Prostate gland (tissue), 2 donors: ENCODE measurements at regions of chr1 and their contacts with region 1.

Region 1: GRCh38 chr1:103106426-103107341 is 1.6 kb downstream of the COL11A1 start:
- DNase-seq: peak; percentile 6
- H3K4me3 ChIP-seq: peak overlapping the region in 1 of 2 donors; percentile 4
- H3K27ac ChIP-seq: no peak overlapping the region
- H3K4me1 ChIP-seq: peaks cover 5% of the 10 kb centered on the region
- H3K27me3 ChIP-seq: no peaks in the 10 kb centered on the region
- CTCF ChIP-seq: peak in 3 of 4 experiments; percentile 29 to 51 (median 29)
- POLR2A ChIP-seq: no peak

Region 2: GRCh38 chr1:102742426-102742825 is 364.3 kb before region 1 on chr1:
- intact Hi-C with region 1: no loop called
- DNase-seq: no peak
- H3K4me3 ChIP-seq: no peak overlapping the region
- H3K27ac ChIP-seq: no peak overlapping the region
- H3K4me1 ChIP-seq: no peaks in the 10 kb centered on the region
- H3K27me3 ChIP-seq: no peaks in the 10 kb centered on the region
- CTCF ChIP-seq: no peak
- POLR2A ChIP-seq: no peak

Region 3: DNA sequence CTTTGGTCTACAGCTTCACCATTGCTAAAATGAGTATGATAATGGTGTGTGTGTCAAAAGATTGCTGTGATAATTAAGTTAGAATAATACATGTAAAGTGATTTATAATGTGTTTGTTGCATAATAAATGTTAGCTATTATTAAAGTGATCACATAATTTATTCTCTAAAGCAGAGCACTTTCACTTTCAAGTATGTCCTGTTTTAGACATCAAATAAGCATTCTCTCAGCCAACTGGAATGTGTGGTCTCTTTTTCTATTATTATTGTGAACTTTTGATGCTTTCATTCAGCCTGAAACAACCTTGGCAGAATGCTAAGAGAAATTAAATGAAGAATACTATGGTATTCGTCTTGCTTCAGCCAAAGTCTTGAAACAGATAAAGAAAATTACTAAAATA is 104.4 kb after region 1 on chr1:
- intact Hi-C with region 1: no loop called
- DNase-seq: no peak
- H3K4me3 ChIP-seq: no peak overlapping the region
- H3K27ac ChIP-seq: no peak overlapping the region
- H3K4me1 ChIP-seq: no peaks in the 10 kb centered on the region
- H3K27me3 ChIP-seq: no peaks in the 10 kb centered on the region
- CTCF ChIP-seq: no peak
- POLR2A ChIP-seq: no peak

Region 4: GRCh38 chr1:103461161-103462105 is 354.7 kb after region 1 on chr1:
- intact Hi-C with region 1: loop called (anchors 10 kb)
- DNase-seq: no peak
- H3K4me3 ChIP-seq: no peak overlapping the region
- H3K27ac ChIP-seq: no peak overlapping the region
- H3K4me1 ChIP-seq: no peaks in the 10 kb centered on the region
- H3K27me3 ChIP-seq: no peaks in the 10 kb centered on the region
- CTCF ChIP-seq: peak in 3 of 4 experiments; percentile 22 to 33 (median 23)
- POLR2A ChIP-seq: no peak

Region 5: GRCh38 chr1:103514920-103515503 is 408.3 kb after region 1 on chr1:
- intact Hi-C with region 1: loop called (anchors 10 kb)
- DNase-seq: no peak
- H3K4me3 ChIP-seq: no peak overlapping the region
- H3K27ac ChIP-seq: no peak overlapping the region
- H3K4me1 ChIP-seq: no peaks in the 10 kb centered on the region
- H3K27me3 ChIP-seq: no peaks in the 10 kb centered on the region
- CTCF ChIP-seq: peak in 3 of 4 experiments; percentile 18 to 68 (median 58)
- POLR2A ChIP-seq: no peak